ENCODE measurements at regions of chr2 and their contacts with region 1.

Region 1: DNA sequence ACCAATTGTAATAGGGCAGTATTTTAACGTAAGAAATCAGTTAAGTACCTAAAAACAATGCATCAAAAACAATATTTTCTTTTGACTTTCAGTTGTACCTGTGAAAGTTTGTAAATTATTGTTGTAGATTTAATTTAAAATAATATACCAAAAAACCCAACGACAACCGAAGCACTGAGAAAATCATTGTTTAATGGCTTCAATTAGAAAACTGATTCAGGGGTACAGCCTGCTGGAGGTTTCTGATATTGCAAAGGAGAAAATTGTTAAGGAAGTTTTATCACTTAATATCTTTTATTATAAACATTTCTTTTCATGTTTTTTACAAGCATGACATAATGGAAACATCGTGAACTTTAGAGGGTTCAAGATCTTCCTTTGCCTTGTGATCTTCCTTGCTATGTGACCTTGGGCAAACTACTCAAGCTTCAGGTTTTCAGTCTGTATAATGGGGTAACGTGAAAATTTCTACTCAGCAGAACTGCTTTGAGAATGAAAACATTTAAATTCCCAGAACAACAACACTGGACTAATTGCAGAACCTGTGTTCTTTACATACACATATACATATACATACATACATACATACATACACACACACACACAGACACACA is 76.3 kb upstream of the GLS start:
- DNase-seq: peak in 3 of 5 donors; percentile 4 to 23 (median 17)
- H3K4me3 ChIP-seq: no peak overlapping the region
- H3K4me3 Mint-ChIP-seq: no peak overlapping the region
- H3K27ac ChIP-seq: no peak overlapping the region
- H3K27ac Mint-ChIP-seq: no peak overlapping the region
- H3K4me1 ChIP-seq: no peaks in the 10 kb centered on the region
- H3K4me1 Mint-ChIP-seq: no peaks in the 10 kb centered on the region
- H3K27me3 ChIP-seq: no peaks in the 10 kb centered on the region
- H3K27me3 Mint-ChIP-seq: no peaks in the 10 kb centered on the region

Region 2: DNA sequence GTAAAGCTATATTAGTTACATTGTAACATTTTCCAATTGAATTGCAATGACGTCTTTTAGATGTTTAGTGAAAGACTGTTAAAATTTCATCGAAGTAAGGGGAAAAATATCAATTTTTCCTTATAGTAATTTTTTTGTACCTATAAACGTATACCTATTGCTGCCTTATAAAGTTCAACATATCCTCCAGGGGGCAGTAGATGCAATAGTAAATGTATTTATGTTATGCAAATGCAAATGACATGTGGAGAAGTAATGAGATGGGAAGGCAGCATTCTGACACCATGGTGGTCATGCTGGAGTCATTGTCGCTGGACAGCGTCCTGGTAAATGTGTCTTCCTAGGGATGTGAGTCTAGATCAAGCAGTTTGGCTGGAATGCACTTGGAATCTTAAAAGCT is 780.4 kb before region 1 on chr2:
- CTCF ChIA-PET with region 1: no interaction called
- POLR2A ChIA-PET with region 1: no interaction called
- intact Hi-C with region 1: loop called (anchors 10 kb)
- DNase-seq: peak in 4 of 5 donors; percentile 24 to 36 (median 27)
- H3K4me3 ChIP-seq: no peak overlapping the region
- H3K4me3 Mint-ChIP-seq: no peak overlapping the region
- H3K27ac ChIP-seq: no peak overlapping the region
- H3K27ac Mint-ChIP-seq: no peak overlapping the region
- H3K4me1 ChIP-seq: no peaks in the 10 kb centered on the region
- H3K4me1 Mint-ChIP-seq: no peaks in the 10 kb centered on the region
- H3K27me3 ChIP-seq: no peaks in the 10 kb centered on the region
- H3K27me3 Mint-ChIP-seq: peaks cover 4 to 12% of the 10 kb centered on the region in 2 donors

Region 3: DNA sequence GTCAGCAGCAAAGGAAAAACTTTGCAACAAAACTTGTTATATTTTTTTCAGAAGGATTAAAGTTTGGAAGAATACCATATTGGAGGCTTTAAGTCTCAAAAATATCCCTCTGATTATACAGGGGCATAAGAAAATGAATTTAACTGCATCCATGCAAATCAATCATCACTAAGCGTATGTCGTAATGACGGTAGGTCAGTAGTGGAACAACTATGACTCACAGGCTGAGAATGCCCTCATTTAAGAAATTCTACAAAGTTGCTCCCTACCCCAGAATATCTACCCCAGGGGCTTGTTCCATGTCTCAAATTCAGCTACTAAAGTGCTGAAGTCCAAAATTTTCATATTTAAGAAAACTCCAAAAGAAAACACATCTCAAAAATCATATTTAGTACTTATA is 167.9 kb before region 1 on chr2:
- CTCF ChIA-PET with region 1: no interaction called
- POLR2A ChIA-PET with region 1: no interaction called
- intact Hi-C with region 1: loop called (anchors 1 kb)
- DNase-seq: no peak
- H3K4me3 ChIP-seq: no peak overlapping the region
- H3K4me3 Mint-ChIP-seq: no peak overlapping the region
- H3K27ac ChIP-seq: no peak overlapping the region
- H3K27ac Mint-ChIP-seq: peak overlapping the region in 1 of 7 donors; percentile 12
- H3K4me1 ChIP-seq: no peaks in the 10 kb centered on the region
- H3K4me1 Mint-ChIP-seq: peaks cover 0 to 6% (median under 1%) of the 10 kb centered on the region in 4 donors
- H3K27me3 ChIP-seq: no peaks in the 10 kb centered on the region
- H3K27me3 Mint-ChIP-seq: no peaks in the 10 kb centered on the region

Measured in CD4-positive, alpha-beta memory T cell (primary cell).